Activated CD4-positive, alpha-beta memory T cell treated with anti-CD3 and anti-CD28 coated beads, Interleukin-2, amount 10 ng/mL, durations not matched to agents 7 days and 5 days (primary cell): ENCODE measurements at regions of chr14 and their contacts with region 1.

Region 1: GRCh38 chr14:96741151-96741977 is 55.8 kb upstream of the VRK1 start:
- DNase-seq: peak; percentile 74
- H3K4me3 Mint-ChIP-seq: peak overlapping the region; percentile 47
- H3K27ac Mint-ChIP-seq: no peak overlapping the region
- H3K4me1 Mint-ChIP-seq: peaks cover 10% of the 10 kb centered on the region
- H3K27me3 Mint-ChIP-seq: peaks cover 67% of the 10 kb centered on the region

Region 2: GRCh38 chr14:96486705-96487104 is 254.7 kb before region 1 on chr14:
- CTCF ChIA-PET with region 1: no interaction called
- POLR2A ChIA-PET with region 1: no interaction called
- DNase-seq: no peak
- H3K4me3 Mint-ChIP-seq: no peak overlapping the region
- H3K27ac Mint-ChIP-seq: no peak overlapping the region
- H3K4me1 Mint-ChIP-seq: no peaks in the 10 kb centered on the region
- H3K27me3 Mint-ChIP-seq: peaks cover 20% of the 10 kb centered on the region

Region 3: DNA sequence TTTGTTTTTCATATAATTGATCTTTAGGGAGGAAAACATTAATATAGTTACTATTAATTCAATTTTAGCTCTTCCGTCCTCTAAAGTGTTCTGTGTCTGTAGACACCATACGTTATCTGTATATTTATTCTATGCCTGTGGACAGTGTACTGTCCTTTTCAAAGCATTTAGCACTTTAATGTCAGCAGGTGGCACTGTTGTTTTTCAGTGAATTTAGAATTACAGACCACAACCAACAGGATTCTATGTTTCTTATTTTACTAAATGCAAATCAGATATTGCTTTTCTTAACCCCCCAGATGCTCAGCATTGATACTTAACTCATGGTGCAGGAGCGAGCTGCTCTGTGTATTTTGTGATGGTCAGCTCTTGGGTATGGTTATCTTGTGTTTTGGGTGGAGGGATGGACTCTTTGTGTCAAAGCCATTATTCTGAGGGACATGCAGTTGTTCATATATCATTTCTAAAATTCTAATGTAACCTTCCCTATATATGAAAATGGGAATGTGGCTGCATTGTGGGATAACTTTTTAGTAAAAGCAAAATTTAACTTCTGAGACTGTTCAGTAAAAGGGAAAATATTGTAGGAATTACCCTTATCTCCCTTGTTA is 174.0 kb before region 1 on chr14:
- CTCF ChIA-PET with region 1: interaction called, 18 read pairs
- POLR2A ChIA-PET with region 1: no interaction called
- DNase-seq: no peak
- H3K4me3 Mint-ChIP-seq: no peak overlapping the region
- H3K27ac Mint-ChIP-seq: no peak overlapping the region
- H3K4me1 Mint-ChIP-seq: no peaks in the 10 kb centered on the region
- H3K27me3 Mint-ChIP-seq: no peaks in the 10 kb centered on the region

Region 4: DNA sequence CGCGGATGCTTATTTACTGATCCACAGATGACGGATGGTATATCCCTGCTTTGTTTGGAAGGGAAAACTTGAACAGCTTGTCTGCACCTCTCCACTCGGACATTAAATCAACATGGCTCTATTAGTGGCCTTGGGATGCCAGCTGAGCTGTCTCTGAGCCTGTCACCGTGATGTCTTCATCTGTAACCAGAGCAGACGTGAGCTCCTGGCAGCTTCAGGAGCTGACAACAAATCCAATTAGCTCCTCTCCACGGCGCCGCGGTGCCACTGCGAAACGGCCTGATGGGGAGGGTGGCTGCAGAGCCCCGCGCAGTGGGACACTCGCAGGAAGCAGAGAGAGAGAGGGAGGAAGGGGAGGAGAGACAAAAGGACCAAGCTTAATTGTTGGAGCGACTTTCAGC is 126.9 kb before region 1 on chr14:
- CTCF ChIA-PET with region 1: no interaction called
- POLR2A ChIA-PET with region 1: no interaction called
- DNase-seq: no peak
- H3K4me3 Mint-ChIP-seq: no peak overlapping the region
- H3K27ac Mint-ChIP-seq: no peak overlapping the region
- H3K4me1 Mint-ChIP-seq: no peaks in the 10 kb centered on the region
- H3K27me3 Mint-ChIP-seq: peaks cover 21% of the 10 kb centered on the region

Region 5: DNA sequence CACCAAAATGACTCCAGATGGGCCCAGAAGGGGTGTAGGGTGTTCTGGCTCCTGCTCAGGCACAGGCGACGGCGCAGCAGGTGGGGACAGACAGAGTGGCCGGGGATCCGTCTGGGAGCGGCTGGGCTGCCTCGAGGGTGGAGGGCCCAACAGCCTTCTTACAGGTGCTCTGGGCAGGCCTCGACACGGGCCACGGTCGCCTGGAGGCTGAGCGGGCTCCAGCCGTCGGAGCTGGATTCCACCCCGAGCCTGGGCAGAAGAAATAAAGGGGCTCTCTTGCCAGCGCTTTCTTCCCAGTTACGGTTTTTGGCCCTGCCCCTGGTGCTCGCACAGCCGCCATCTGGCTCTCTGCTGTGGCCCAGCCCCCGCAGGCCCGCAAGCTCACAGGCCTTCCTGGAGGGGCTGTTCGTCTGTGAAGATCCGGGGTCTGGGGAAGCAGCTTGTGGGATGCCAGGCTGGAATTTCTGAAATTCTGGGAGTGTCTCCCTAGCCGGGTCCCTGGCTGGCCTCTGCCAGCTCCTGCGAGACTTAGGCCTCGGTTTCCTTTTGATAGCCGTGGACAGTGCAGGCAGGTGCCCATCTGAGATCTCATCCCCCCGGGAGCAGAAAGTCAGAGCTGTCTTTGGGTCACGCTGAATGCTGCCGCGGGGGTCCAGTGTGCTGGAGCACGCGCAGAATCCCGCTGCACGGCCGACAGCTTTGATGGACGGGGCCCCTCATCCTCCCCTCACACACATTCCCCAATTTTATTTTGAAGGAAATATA is 116.5 kb before region 1 on chr14:
- CTCF ChIA-PET with region 1: no interaction called
- POLR2A ChIA-PET with region 1: no interaction called
- DNase-seq: no peak
- H3K4me3 Mint-ChIP-seq: no peak overlapping the region
- H3K27ac Mint-ChIP-seq: no peak overlapping the region
- H3K4me1 Mint-ChIP-seq: no peaks in the 10 kb centered on the region
- H3K27me3 Mint-ChIP-seq: no peaks in the 10 kb centered on the region

Region 6: DNA sequence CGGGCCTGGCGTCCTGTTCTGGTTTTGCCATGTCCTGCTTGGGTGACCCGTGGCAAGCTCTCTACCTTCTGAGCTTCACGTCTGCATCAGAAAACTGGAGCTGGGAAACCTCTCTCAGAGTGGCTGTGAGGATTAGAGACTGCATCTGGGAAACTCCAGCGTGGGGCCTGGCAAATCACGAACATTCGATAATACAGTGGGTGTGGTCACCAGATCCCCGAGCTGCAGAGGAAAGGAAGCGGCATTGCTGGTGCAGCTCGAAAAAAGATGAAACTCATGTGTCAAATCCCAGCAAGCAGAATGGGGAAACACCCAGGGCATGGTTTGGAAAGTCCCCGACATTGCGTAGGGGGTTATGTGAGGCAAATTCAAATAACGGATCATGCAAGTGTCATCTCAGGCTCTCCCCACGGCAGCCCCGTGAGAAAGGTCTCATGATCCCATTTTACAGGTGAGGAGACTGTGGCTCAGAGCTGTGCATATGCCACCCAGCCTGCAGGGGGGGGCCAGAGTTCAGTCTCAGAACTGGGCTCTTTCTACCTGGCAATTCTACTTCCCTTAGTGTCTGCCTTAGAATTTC is 42.3 kb before region 1 on chr14:
- CTCF ChIA-PET with region 1: interaction called, 13 read pairs
- POLR2A ChIA-PET with region 1: no interaction called
- DNase-seq: peak; percentile 39
- H3K4me3 Mint-ChIP-seq: no peak overlapping the region
- H3K27ac Mint-ChIP-seq: no peak overlapping the region
- H3K4me1 Mint-ChIP-seq: no peaks in the 10 kb centered on the region
- H3K27me3 Mint-ChIP-seq: peaks cover 5% of the 10 kb centered on the region